ENCODE measurements at regions of chr4 and their contacts with region 1.

Region 1: DNA sequence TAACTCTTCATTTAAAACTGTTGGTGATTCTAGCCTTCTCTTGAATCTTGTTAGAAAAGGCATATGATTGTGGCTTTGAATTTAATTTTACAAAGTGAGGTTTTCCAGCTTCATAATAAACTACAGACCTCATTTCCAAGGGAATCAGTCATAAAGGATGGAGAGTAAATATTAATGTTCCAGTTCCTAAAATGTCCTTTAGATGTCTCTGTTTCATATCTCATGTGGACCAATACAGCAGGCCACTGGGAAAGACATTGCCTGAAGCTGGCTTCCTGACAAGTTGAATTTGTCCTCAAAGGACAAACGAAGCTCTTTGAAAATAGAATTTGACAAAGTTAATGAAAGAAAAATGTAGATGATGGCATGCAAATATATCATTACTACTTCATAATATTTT is 125.4 kb downstream of the ZNF330 start:
- DNase-seq: peak; percentile 66
- H3K4me3 Mint-ChIP-seq: no peak overlapping the region
- H3K27ac Mint-ChIP-seq: no peak overlapping the region
- H3K4me1 Mint-ChIP-seq: peaks cover 11% of the 10 kb centered on the region
- H3K27me3 Mint-ChIP-seq: no peaks in the 10 kb centered on the region
- CTCF ChIP-seq: peak; percentile 58

Region 2: DNA sequence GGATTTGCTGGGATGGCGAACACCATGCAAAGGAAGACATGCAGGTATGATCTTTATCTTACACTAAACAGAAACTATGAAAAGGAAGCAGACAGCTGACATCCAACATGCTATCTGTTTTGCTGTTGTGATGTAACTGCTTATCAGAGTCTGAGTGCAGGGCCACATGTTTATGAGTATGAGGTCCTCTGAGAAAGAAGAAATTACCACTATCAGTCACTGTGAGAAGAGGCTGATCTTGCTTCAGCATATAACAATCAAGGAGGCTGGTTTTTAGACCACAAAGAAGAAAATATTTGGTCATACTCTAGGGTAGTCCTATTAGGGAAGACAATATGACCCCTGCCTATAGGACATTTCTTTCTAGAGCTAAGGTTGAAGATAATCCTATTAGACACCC is 937.2 kb before region 1 on chr4:
- CTCF ChIA-PET with region 1: no interaction called
- POLR2A ChIA-PET with region 1: no interaction called
- intact Hi-C with region 1: no loop called
- DNase-seq: no peak
- H3K4me3 Mint-ChIP-seq: no peak overlapping the region
- H3K27ac Mint-ChIP-seq: no peak overlapping the region
- H3K4me1 Mint-ChIP-seq: no peaks in the 10 kb centered on the region
- H3K27me3 Mint-ChIP-seq: no peaks in the 10 kb centered on the region
- CTCF ChIP-seq: no peak

Region 3: GRCh38 chr4:141307241-141307689 is 38.9 kb before region 1 on chr4:
- CTCF ChIA-PET with region 1: interaction called, 26 read pairs
- POLR2A ChIA-PET with region 1: interaction called, 3 read pairs
- intact Hi-C with region 1: loop called (anchors 2 kb)
- DNase-seq: peak; percentile 69
- H3K4me3 Mint-ChIP-seq: no peak overlapping the region
- H3K27ac Mint-ChIP-seq: peak overlapping the region; percentile 17
- H3K4me1 Mint-ChIP-seq: no peaks in the 10 kb centered on the region
- H3K27me3 Mint-ChIP-seq: no peaks in the 10 kb centered on the region
- CTCF ChIP-seq: peak; percentile 77

Region 4: GRCh38 chr4:141356963-141357335 is 10.8 kb after region 1 on chr4:
- CTCF ChIA-PET with region 1: interaction called, 11 read pairs
- POLR2A ChIA-PET with region 1: no interaction called
- intact Hi-C with region 1: no loop called
- DNase-seq: no peak
- H3K4me3 Mint-ChIP-seq: no peak overlapping the region
- H3K27ac Mint-ChIP-seq: no peak overlapping the region
- H3K4me1 Mint-ChIP-seq: peaks cover 10% of the 10 kb centered on the region
- H3K27me3 Mint-ChIP-seq: no peaks in the 10 kb centered on the region
- CTCF ChIP-seq: no peak

Region 5: DNA sequence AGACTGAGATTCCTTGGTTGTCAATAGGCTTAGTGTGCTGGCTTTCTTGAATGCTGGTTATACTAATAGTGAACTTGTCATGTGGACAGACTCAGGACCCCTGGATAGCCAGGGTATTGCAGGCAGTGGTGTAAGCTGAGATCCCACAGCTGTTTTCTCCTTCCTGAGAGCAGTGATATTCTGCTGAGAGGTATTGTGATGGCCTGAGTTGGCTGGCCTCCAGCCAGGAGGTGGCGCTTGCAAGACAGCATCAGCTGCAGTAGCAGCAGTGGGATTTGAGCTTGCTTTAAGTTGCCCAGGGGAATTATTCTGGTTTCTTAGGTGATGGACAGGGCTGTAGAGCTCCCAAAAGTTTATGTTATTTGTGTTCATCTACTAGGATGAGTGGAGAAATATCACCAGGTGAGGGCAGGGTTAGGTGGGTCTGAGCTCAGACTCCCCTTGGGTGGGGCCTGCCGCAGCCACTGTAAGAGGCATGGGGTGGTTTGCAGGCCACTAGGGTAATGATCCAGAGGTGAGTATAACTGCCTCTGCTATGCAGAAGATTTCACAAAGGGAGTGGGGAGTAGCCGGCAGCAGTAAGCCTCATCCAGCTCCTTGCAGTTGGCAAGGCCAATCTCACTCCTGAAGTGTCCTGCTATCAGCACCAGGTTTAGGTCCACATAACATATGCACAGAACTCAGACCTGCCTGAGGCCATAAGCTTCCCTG is 356.5 kb after region 1 on chr4:
- CTCF ChIA-PET with region 1: interaction called, 15 read pairs
- POLR2A ChIA-PET with region 1: no interaction called
- intact Hi-C with region 1: no loop called
- DNase-seq: peak; percentile 22
- H3K4me3 Mint-ChIP-seq: no peak overlapping the region
- H3K27ac Mint-ChIP-seq: no peak overlapping the region
- H3K4me1 Mint-ChIP-seq: no peaks in the 10 kb centered on the region
- H3K27me3 Mint-ChIP-seq: no peaks in the 10 kb centered on the region
- CTCF ChIP-seq: no peak

Region 6: DNA sequence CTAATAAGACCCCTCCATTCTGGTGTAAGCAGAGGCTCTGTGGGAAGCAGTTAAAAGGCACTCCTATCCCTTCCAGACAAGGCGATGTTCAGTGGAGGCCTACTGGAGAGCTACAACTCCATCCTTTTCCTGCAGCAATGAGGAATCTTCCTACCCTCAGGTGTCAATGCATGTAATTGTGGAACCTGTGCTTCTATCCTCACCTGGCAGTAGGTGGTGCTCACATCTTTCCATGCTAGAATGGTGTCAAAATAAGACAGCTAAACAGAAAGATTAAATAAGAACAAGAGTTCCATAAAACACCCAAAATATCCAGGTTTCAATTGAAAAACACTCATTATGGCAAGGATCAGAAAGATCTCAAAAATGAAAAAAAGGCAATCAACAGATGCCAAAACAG is 514.8 kb after region 1 on chr4:
- CTCF ChIA-PET with region 1: interaction called, 10 read pairs
- POLR2A ChIA-PET with region 1: interaction called, 3 read pairs
- intact Hi-C with region 1: no loop called
- DNase-seq: peak; percentile 47
- H3K4me3 Mint-ChIP-seq: no peak overlapping the region
- H3K27ac Mint-ChIP-seq: no peak overlapping the region
- H3K4me1 Mint-ChIP-seq: no peaks in the 10 kb centered on the region
- H3K27me3 Mint-ChIP-seq: no peaks in the 10 kb centered on the region
- CTCF ChIP-seq: peak; percentile 20

Region 7: DNA sequence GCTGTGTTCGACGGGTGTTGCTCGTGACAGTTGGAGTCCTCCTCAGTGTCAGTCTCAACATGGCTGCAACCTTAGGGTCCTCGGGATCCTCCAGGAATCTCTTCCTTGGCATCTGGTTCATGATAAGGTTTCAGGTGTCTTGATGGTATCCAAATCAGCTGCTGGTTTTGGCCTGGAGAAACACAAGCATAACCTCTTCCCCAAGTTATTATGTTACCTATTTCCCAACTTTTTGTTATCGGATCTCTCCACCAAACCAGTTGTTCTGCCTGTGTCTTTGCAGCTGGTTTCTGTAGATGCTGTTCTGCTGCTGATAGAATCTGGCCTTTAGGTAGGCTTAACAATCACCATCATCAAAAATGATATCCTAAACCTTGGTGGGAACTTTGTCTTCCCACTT is 593.2 kb after region 1 on chr4:
- CTCF ChIA-PET with region 1: no interaction called
- POLR2A ChIA-PET with region 1: no interaction called
- intact Hi-C with region 1: no loop called
- DNase-seq: no peak
- H3K4me3 Mint-ChIP-seq: no peak overlapping the region
- H3K27ac Mint-ChIP-seq: no peak overlapping the region
- H3K4me1 Mint-ChIP-seq: no peaks in the 10 kb centered on the region
- H3K27me3 Mint-ChIP-seq: no peaks in the 10 kb centered on the region
- CTCF ChIP-seq: no peak

Region 8: DNA sequence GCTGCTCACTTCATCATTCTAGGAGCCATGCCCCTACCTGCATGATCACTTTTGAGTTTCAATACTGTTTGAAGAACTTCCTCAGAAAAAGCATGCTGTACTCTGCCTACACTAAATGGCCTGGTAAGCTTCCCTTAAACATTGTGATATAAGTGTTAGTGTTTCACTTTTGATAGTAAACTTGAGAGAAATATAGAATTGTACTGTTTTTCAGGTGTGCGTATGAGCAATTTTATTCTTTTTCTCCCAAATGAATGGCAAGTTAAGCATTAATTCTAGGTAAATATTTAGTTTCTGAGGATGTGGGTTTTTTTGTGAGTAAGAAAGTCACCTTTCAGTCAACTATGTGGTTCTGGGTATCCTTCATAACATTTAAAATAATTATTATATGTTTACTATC is 774.8 kb after region 1 on chr4:
- CTCF ChIA-PET with region 1: no interaction called
- POLR2A ChIA-PET with region 1: no interaction called
- intact Hi-C with region 1: loop called (anchors 5 kb)
- DNase-seq: no peak
- H3K4me3 Mint-ChIP-seq: no peak overlapping the region
- H3K27ac Mint-ChIP-seq: no peak overlapping the region
- H3K4me1 Mint-ChIP-seq: no peaks in the 10 kb centered on the region
- H3K27me3 Mint-ChIP-seq: no peaks in the 10 kb centered on the region
- CTCF ChIP-seq: no peak